Activated CD8-positive, alpha-beta T cell treated with anti-CD3 and anti-CD28 coated beads, Interleukin-2, amount 10 ng/mL, durations not matched to agents 7 days and 5 days (primary cell): ENCODE measurements at regions of chr12 and their contacts with region 1.

Region 1: GRCh38 chr12:45543906-45544315 is 185.6 kb upstream of the ARID2 start:
- DNase-seq: peak; percentile 78
- ATAC-seq: peak; percentile 97
- H3K4me3 Mint-ChIP-seq: no peak overlapping the region
- H3K27ac Mint-ChIP-seq: no peak overlapping the region
- H3K4me1 Mint-ChIP-seq: peaks cover 5% of the 10 kb centered on the region
- H3K27me3 Mint-ChIP-seq: peaks cover 13% of the 10 kb centered on the region

Region 2: GRCh38 chr12:45518291-45519235 is 25.3 kb before region 1 on chr12:
- CTCF ChIA-PET with region 1: interaction called, 24 read pairs
- POLR2A ChIA-PET with region 1: no interaction called
- DNase-seq: peak; percentile 68
- ATAC-seq: peak; percentile 91
- H3K4me3 Mint-ChIP-seq: peak overlapping the region; percentile 12
- H3K27ac Mint-ChIP-seq: peak overlapping the region; percentile 90
- H3K4me1 Mint-ChIP-seq: peaks cover 17% of the 10 kb centered on the region
- H3K27me3 Mint-ChIP-seq: no peaks in the 10 kb centered on the region

Region 3: DNA sequence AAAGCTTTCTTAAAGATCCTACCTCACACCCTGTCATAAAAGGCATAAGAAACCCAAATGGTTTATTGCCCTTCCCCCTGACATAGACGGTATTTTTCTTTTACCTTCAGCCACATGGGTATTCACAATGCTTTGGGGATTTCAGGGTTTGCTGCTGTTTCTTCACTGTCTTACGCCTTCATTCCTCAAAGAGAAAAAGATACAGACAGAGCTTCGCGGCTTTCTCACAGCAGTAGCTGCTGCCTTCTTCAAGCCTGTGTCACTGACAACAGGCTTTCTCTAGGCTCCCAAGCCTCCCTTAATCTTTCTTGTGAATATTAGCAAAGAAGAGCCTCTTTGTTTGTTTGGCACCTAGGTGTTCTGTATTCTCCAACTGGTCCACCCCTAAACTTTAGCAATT is 11.8 kb before region 1 on chr12:
- CTCF ChIA-PET with region 1: interaction called, 15 read pairs
- POLR2A ChIA-PET with region 1: no interaction called
- DNase-seq: no peak
- ATAC-seq: no peak
- H3K4me3 Mint-ChIP-seq: no peak overlapping the region
- H3K27ac Mint-ChIP-seq: no peak overlapping the region
- H3K4me1 Mint-ChIP-seq: no peaks in the 10 kb centered on the region
- H3K27me3 Mint-ChIP-seq: peaks cover under 1% of the 10 kb centered on the region

Region 4: DNA sequence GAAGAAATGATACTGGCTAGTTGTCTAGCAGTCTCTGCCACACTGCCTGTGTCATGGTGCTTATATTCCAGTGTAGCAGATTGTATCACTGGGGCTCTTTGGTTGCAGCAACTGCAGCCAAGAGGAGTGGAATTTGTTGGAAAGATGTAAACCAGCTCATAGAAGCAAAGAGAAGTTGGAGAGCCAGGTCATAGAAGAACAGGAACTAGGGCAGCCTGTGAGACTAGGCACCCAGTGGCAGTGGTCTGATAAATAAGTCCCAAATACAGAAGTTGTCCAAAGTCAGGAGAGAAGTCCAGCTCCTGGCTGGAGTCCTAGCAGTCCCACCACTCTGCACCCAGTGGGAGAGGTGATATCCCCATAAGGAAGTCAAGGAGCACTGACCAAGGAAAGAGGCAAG is 13.1 kb after region 1 on chr12:
- CTCF ChIA-PET with region 1: interaction called, 11 read pairs
- POLR2A ChIA-PET with region 1: interaction called, 3 read pairs
- DNase-seq: no peak
- ATAC-seq: no peak
- H3K4me3 Mint-ChIP-seq: no peak overlapping the region
- H3K27ac Mint-ChIP-seq: no peak overlapping the region
- H3K4me1 Mint-ChIP-seq: no peaks in the 10 kb centered on the region
- H3K27me3 Mint-ChIP-seq: peaks cover 1% of the 10 kb centered on the region

Region 5: DNA sequence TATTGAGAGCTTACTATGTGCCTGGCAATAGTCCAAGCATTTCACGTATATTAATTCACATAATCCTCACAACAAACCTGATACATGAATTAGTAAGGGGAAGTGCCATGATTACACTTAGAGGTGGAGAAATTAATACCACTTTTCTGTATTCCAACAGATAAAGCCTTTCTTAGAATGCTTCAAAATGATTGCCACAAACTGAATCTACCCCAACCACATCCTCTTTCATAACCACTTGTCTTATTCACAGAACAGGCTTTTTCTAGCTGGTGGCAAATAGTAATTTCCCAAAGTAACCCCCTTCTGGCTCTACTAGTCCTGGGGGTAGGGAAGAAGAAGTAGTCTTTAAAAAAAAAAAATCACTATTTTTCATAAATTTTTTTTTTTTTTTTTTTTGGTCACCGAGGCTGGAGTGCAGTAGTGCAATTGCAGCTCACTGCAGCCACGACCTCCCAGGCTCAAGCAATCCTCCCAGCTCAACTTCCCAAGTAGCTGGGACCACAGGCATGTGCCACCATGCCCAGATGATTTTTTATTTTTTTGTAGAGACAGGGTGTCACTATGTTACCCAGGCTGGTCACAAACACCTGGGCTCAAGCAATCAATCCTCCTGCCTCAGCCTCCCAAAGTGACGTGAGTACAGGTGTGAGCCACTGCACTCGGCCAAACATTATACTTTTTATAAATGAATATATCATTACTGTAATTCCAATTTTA is 126.6 kb after region 1 on chr12:
- CTCF ChIA-PET with region 1: interaction called, 19 read pairs
- POLR2A ChIA-PET with region 1: interaction called, 6 read pairs
- DNase-seq: peak; percentile 56
- ATAC-seq: peak; percentile 58
- H3K4me3 Mint-ChIP-seq: peak overlapping the region; percentile 23
- H3K27ac Mint-ChIP-seq: peak overlapping the region; percentile 74
- H3K4me1 Mint-ChIP-seq: peaks cover 48% of the 10 kb centered on the region
- H3K27me3 Mint-ChIP-seq: no peaks in the 10 kb centered on the region

Region 6: DNA sequence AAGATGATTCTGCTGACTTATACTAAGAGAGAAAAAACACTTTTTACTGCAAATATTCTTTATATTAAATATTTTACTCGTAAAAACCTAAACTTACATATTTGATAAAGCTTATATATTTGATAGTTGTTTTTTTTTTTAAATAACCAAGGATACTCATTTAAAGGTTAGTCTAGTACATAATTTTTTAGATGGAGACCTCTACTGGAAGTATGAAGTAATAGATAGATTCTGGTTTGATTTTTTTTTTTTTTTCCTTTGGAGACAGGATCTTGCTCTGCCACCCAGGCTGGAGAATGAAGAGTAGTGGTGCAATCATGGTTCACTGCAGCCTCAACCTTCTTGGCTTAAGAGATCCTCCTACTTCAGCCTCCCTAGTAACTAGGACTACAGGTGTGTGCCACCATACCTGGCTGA is 202.0 kb after region 1 on chr12:
- CTCF ChIA-PET with region 1: interaction called, 49 read pairs
- POLR2A ChIA-PET with region 1: no interaction called
- DNase-seq: no peak
- ATAC-seq: peak; percentile 39
- H3K4me3 Mint-ChIP-seq: no peak overlapping the region
- H3K27ac Mint-ChIP-seq: no peak overlapping the region
- H3K4me1 Mint-ChIP-seq: peaks cover 36% of the 10 kb centered on the region
- H3K27me3 Mint-ChIP-seq: no peaks in the 10 kb centered on the region